ENCODE measurements at regions of chr6 and their contacts with region 1.

Region 1: GRCh38 chr6:133159255-133159795 is 81.8 kb upstream of the EYA4 start:
- DNase-seq: no peak
- H3K4me3 ChIP-seq: no peak overlapping the region
- H3K27ac ChIP-seq: no peak overlapping the region
- H3K4me1 ChIP-seq: no peaks in the 10 kb centered on the region
- H3K27me3 ChIP-seq: no peaks in the 10 kb centered on the region
- CTCF ChIP-seq: no peak

Region 2: DNA sequence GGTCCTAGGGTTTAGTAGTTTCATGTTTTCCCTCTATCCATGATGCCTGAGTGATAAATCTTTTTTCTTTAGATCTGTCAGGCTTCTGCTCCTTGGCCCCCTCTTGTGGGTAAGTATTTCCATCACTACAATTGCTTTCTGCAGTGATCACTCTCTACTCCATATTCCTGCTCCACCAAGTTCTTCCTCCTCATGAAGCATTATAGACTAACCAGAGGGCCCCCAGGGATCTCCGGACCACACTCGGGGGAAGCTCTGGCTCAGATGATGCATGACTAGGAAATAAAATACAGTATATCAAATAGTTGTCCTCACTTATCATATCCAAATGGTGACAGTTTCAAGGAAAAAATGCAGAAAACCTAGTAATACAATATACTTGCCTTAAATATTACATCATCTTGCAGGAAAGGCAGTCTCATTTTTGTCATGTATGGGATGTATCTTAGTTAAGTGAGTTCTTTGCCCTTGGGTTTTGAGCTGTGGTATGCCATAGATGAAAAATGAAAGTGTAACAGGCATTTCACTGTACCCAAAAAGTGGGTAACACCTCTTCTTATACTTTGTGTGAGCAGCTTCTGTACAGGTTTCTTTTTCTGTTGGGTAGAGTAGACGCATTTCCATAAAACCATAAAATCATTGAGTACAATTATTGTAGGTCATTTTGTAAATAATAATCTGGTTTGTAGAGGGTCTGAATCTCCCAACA is 119.1 kb before region 1 on chr6:
- CTCF ChIA-PET with region 1: no interaction called
- POLR2A ChIA-PET with region 1: no interaction called
- intact Hi-C with region 1: loop called (anchors 10 kb)
- DNase-seq: peak in 1 of 2 experiments; percentile 10
- H3K4me3 ChIP-seq: no peak overlapping the region
- H3K27ac ChIP-seq: no peak overlapping the region
- H3K4me1 ChIP-seq: no peaks in the 10 kb centered on the region
- H3K27me3 ChIP-seq: no peaks in the 10 kb centered on the region
- CTCF ChIP-seq: peak; percentile 71